ENCODE measurements at regions of chr4 and their contacts with region 1.

Region 1: DNA sequence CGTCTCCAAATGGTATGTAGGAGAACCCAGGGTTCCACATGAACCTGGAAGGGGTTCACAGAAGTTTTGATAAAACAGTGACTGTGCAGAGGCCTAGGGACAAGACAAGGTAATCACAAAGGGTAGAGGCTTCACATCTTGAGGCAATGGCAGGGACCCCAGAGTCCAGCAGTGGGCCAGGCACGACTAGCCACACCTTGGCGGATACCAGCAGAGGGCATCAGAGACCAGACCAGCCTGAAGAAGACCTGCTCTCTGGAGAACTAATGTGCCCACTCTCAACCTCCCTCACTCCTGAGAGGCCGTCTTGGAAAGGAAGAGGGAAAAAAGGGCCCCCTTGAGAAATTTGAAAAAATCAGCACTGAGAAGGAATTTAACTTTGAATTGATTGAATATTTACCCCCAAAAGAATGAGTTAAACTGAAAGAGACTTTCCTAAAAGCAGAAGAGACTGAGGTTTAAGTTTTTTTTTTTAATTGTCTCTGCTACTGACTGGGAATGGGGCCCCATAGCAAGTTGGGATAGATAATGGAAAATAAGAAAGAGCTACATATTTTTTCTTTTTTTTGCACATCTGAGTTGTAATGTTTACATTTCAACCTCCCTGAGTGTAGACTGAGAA is 243.8 kb upstream of the JADE1 start:
- DNase-seq: peak; percentile 54 to 75 (median 63)
- ATAC-seq: peak; percentile 75 to 92 (median 88)
- H3K4me3 ChIP-seq: no peak overlapping the region
- H3K27ac ChIP-seq: no peak overlapping the region
- H3K4me1 ChIP-seq: peaks cover 9 to 17% (median 11%) of the 10 kb centered on the region in 3 donors
- H3K27me3 ChIP-seq: no peaks in the 10 kb centered on the region
- CTCF ChIP-seq: peak in 3 of 4 donors; percentile 50 to 62 (median 58)

Region 2: GRCh38 chr4:128322311-128322710 is 243.4 kb before region 1 on chr4:
- intact Hi-C with region 1: no loop called
- DNase-seq: no peak
- ATAC-seq: no peak
- H3K4me3 ChIP-seq: no peak overlapping the region
- H3K27ac ChIP-seq: no peak overlapping the region
- H3K4me1 ChIP-seq: no peaks in the 10 kb centered on the region
- H3K27me3 ChIP-seq: no peaks in the 10 kb centered on the region
- CTCF ChIP-seq: no peak

Region 3: DNA sequence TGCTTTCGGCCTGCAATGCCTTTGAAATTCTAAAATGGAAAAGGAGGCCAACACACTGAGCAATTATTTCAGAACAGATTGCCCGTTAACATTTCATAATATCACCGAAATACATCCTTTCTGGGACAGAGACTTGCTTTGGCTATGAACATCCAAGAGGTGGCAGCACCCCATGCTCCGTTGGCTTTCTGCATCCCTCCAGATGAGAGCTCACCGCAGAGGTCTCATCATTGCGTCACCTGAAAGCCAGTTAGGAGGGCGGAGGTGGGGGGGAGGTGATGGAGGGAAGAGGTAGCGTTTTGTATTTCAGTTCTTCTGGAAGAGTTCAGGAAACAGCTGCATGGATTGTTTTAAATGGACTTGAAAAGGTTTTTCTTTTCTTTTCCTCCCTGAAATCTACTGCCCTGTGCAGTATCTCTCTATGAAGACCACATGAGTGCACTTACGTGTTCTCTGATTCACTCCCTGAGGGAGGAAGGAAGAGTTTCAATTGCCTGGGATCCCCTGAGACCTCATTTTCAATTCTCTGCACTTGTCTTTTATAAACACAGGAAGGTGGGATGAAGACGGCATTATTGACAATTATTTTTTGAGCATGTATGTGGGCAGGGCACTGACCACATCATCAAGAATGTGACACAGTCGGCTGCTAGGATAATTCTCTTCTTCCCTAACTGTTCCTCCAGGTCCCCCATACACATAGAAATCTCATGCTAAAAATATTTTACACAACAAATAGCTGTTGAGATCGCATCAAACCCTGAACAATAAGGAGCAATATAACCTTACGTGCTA is 111.2 kb before region 1 on chr4:
- intact Hi-C with region 1: loop called in 1 of 3 experiments (anchors 10 kb)
- DNase-seq: peak; percentile 62 to 76 (median 67)
- ATAC-seq: peak; percentile 86 to 98 (median 98)
- H3K4me3 ChIP-seq: no peak overlapping the region
- H3K27ac ChIP-seq: no peak overlapping the region
- H3K4me1 ChIP-seq: no peaks in the 10 kb centered on the region
- H3K27me3 ChIP-seq: no peaks in the 10 kb centered on the region
- CTCF ChIP-seq: peak in 3 of 4 donors; percentile 49 to 60 (median 54)

Region 4: GRCh38 chr4:128686032-128686465 is 120.4 kb after region 1 on chr4:
- intact Hi-C with region 1: no loop called
- DNase-seq: no peak
- ATAC-seq: peak in 1 of 4 donors; percentile 66
- H3K4me3 ChIP-seq: no peak overlapping the region
- H3K27ac ChIP-seq: no peak overlapping the region
- H3K4me1 ChIP-seq: no peaks in the 10 kb centered on the region
- H3K27me3 ChIP-seq: no peaks in the 10 kb centered on the region
- CTCF ChIP-seq: no peak

Region 5: GRCh38 chr4:128809477-128810330 is 244.0 kb after region 1 on chr4 and contains the start of gene JADE1:
- intact Hi-C with region 1: loop called in 1 of 3 experiments (anchors 10 kb)
- DNase-seq: peak; percentile 91 to 95 (median 93)
- ATAC-seq: peak; percentile 45 to 74 (median 66)
- H3K4me3 ChIP-seq: peak within 1 kb of the TSS; percentile 56 to 85 (median 71)
- H3K27ac ChIP-seq: peak within 1 kb of the TSS; percentile 96 to 98 (median 96)
- H3K4me1 ChIP-seq: peaks cover 0 to 11% (median 10%) of the 10 kb centered on the region in 3 donors
- H3K27me3 ChIP-seq: no peaks in the 10 kb centered on the region
- CTCF ChIP-seq: peak in 3 of 4 donors; percentile 26 to 33 (median 29)
- total RNA-seq, gene JADE1: 28.6 to 92.1 (median 36.0) TPM

Region 6: DNA sequence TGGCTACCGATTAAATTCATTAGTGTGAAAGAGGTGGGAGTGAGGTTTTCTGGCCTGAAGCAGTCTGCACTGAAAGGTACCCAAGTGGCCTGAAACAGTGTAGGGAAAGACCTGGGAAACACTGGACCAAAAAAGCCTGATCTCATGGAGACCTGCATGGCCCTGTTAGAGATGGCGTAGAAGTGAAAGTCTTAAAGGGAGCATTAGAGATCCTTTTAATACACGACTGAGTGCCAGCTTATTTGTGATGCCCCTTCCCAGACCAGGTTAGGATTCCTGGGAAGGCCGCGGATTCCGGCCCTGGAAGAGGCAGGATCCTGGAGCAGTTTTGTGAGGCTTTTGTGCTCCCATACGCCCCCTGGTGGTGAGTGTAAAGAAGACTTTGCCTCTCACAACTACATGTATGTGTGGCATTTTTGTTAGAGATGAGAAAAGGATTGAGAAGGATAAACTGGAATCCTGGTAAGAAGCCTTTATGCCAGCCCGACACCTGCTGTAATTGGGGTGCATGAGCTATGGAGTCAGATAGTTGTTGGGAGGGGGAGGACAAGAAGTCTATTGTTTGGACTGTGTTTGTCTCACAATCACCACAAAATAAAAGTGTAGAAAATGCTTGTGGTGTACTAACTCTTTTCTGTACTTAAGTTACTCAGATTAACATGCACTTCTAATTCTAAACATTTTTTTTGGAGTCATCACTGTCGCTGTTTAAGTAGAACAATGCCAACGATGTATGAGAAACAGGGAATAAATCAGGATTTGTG is 297.8 kb after region 1 on chr4:
- intact Hi-C with region 1: loop called in 1 of 3 experiments (anchors 10 kb)
- DNase-seq: peak; percentile 64 to 88 (median 81)
- ATAC-seq: peak; percentile 65 to 87 (median 83)
- H3K4me3 ChIP-seq: no peak overlapping the region
- H3K27ac ChIP-seq: no peak overlapping the region
- H3K4me1 ChIP-seq: peaks cover 0 to 6% (median 5%) of the 10 kb centered on the region in 3 donors
- H3K27me3 ChIP-seq: no peaks in the 10 kb centered on the region
- CTCF ChIP-seq: peak; percentile 66 to 89 (median 84)